Caco-2 (cell line): ENCODE measurements at regions of chr6 and their contacts with region 1.

Region 1: GRCh38 chr6:116801971-116802370 is 26.9 kb downstream of the GPRC6A start:
- DNase-seq: no peak
- H3K4me3 ChIP-seq: no peak overlapping the region
- H3K4me3 Mint-ChIP-seq: no peak overlapping the region
- H3K27ac Mint-ChIP-seq: no peak overlapping the region
- H3K4me1 ChIP-seq: peaks cover 20% of the 10 kb centered on the region; the same call in 1 of the 2 replicates
- H3K4me1 Mint-ChIP-seq: peaks cover 23% of the 10 kb centered on the region
- H3K27me3 ChIP-seq: no peaks in the 10 kb centered on the region
- H3K27me3 Mint-ChIP-seq: no peaks in the 10 kb centered on the region
- CTCF ChIP-seq: no peak

Region 2: GRCh38 chr6:116827561-116828240 is 25.7 kb after region 1 on chr6:
- CTCF ChIA-PET with region 1: no interaction called
- POLR2A ChIA-PET with region 1: no interaction called
- intact Hi-C with region 1: loop called (anchors 2 kb)
- DNase-seq: no peak
- H3K4me3 ChIP-seq: no peak overlapping the region
- H3K4me3 Mint-ChIP-seq: no peak overlapping the region
- H3K27ac Mint-ChIP-seq: no peak overlapping the region
- H3K4me1 ChIP-seq: peaks cover 4% of the 10 kb centered on the region
- H3K4me1 Mint-ChIP-seq: peaks cover 7% of the 10 kb centered on the region
- H3K27me3 ChIP-seq: no peaks in the 10 kb centered on the region
- H3K27me3 Mint-ChIP-seq: no peaks in the 10 kb centered on the region
- CTCF ChIP-seq: no peak

Region 3: DNA sequence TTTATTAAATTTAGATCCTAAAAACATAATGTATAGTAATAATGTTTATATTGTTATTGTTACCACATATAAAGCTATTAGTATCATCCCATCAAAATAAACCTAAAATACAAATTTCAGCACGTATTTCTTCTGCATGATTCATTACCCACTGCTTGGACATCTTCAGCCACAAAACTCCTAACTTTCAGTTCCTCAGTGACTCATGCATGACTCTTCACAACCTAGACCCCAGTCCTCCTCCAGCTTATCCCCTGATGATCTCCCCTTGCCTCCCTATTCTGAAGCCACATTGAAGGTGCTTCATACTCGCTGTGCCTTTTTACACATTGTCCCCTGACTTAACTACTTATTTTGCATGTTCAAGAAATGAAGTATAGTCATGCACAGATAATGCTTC is 38.1 kb after region 1 on chr6:
- CTCF ChIA-PET with region 1: no interaction called
- POLR2A ChIA-PET with region 1: no interaction called
- intact Hi-C with region 1: loop called (anchors 2 kb)
- DNase-seq: no peak
- H3K4me3 ChIP-seq: no peak overlapping the region
- H3K4me3 Mint-ChIP-seq: no peak overlapping the region
- H3K27ac Mint-ChIP-seq: no peak overlapping the region
- H3K4me1 ChIP-seq: peaks cover 12% of the 10 kb centered on the region
- H3K4me1 Mint-ChIP-seq: peaks cover 11% of the 10 kb centered on the region
- H3K27me3 ChIP-seq: no peaks in the 10 kb centered on the region
- H3K27me3 Mint-ChIP-seq: no peaks in the 10 kb centered on the region
- CTCF ChIP-seq: no peak